ENCODE measurements at regions of chr14 and their contacts with region 1.

Region 1: DNA sequence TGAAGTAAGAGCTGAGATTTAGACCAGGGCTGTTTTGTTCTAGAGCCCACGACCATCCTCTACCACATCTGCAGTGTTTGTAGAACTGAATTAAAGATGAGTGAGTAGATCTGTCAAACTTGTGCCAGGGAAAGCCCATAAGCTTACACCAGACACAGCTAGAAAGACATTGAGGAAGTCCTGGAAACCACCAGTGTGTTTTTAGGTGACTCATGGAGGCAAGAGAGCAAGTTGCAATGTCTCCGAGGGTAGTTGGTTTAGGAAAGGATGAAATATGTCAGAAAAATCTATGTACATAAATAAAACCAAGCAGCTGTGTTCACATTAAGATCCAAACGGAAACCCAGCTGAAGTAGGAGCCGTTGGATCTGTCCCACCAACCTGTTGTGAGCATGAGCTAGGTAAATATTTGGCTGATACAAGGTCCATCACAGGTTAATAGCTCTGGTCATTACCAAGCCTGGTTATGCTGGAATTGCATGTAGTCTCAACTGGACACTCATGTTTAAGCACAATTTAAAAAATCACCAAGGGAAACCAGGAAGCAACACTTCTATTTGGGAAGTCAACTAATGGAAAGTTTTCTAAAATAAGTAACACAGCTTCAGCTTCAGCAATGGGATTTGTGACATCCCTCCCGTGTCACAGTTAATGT is 49.9 kb upstream of the PLEKHG3 start:
- DNase-seq: peak; percentile 91
- H3K4me3 ChIP-seq: no peak overlapping the region
- H3K27ac ChIP-seq: no peak overlapping the region
- H3K4me1 ChIP-seq: peaks cover 11% of the 10 kb centered on the region
- H3K27me3 ChIP-seq: no peaks in the 10 kb centered on the region
- CTCF ChIP-seq: no peak

Region 2: DNA sequence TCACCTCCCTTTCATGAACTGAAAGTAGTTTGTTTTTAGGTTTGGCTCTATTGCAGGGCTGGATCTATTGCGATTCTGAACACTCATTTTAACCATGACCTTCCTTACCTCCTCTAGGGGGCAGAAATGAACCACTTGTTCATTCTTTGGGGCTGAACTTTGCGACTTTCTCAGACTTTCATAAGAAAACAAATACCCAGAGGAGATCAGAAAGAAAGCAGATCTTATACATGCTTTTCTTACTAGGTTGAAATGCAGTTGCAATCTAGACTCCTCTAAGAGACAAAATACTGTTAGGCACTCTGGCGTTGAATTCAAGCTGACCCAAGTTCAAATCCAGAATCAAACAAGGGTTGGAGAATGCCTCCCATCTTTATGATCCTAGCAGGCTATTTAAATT is 17.2 kb after region 1 on chr14:
- CTCF ChIA-PET with region 1: no interaction called
- dilution Hi-C with region 1: no loop called
- in situ Hi-C with region 1: no loop called
- intact Hi-C with region 1: no loop called
- DNase-seq: peak; percentile 60
- H3K4me3 ChIP-seq: no peak overlapping the region
- H3K27ac ChIP-seq: no peak overlapping the region
- H3K4me1 ChIP-seq: peaks cover 27% of the 10 kb centered on the region
- H3K27me3 ChIP-seq: no peaks in the 10 kb centered on the region
- CTCF ChIP-seq: peak; percentile 72 to 82

Region 3: DNA sequence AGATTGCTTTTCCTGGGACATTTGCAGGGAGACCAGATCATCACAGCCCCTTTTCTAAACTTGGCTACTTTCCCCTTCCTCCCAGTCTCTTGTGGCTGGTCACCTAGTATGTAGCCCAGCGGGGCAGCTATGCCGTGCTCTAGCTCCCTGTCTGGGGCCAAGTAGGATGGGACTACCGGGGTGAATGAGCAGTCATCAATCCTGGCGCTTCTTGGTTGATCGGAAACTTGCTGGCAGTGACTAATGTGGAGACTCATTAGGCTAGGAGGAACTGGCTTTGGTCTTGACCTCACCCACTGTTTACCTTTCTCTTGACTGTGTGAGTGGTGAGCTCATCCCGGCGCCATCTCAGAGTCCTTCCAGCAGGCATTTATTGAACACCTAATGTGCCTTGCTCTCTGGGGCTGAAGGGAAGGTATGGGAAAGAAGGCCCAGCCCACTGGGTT is 65.8 kb after region 1 on chr14:
- CTCF ChIA-PET with region 1: no interaction called
- dilution Hi-C with region 1: loop called (anchors 10 kb)
- in situ Hi-C with region 1: no loop called
- intact Hi-C with region 1: no loop called
- DNase-seq: peak; percentile 98
- H3K4me3 ChIP-seq: no peak overlapping the region
- H3K27ac ChIP-seq: peak overlapping the region; percentile 89
- H3K4me1 ChIP-seq: peaks cover 98% of the 10 kb centered on the region
- H3K27me3 ChIP-seq: no peaks in the 10 kb centered on the region
- CTCF ChIP-seq: no peak

Region 4: GRCh38 chr14:64734990-64735389 is 80.6 kb after region 1 on chr14:
- CTCF ChIA-PET with region 1: no interaction called
- dilution Hi-C with region 1: loop called (anchors 5 kb)
- in situ Hi-C with region 1: no loop called
- intact Hi-C with region 1: no loop called
- DNase-seq: no peak
- H3K4me3 ChIP-seq: no peak overlapping the region
- H3K27ac ChIP-seq: no peak overlapping the region
- H3K4me1 ChIP-seq: peaks cover 6% of the 10 kb centered on the region
- H3K27me3 ChIP-seq: no peaks in the 10 kb centered on the region
- CTCF ChIP-seq: no peak

Region 5: DNA sequence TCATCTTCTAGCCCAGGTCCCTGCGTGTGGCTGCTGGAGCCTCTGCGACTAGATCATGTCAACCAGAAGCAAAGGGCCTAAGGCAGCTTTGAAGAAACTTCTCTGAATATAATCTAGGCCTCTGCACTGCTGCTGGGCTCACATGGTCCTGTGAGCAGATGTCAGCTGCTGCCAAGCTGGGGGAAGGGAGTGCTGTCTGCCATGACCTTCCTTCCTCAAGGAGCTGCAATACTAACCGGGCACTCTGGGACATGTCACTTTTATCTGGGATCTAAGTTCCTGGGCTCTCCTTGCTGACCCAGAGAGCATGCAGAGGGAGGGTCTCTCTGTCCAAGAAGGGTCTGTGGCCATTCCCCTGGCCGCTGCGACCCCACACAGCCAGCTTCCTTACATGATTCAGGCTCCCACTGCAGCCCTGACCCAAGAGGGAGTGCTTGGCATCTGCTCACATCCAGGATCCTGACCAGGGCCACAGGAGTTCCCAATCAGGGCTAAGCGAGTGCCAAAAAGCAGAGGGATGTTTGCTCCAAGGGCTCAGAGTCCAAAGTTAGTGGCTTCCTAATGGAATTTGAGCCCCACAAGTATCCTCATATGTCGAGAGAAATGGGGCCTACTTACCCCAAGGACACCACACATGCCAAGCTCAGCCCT is 123.9 kb after region 1 on chr14:
- CTCF ChIA-PET with region 1: no interaction called
- dilution Hi-C with region 1: no loop called
- in situ Hi-C with region 1: no loop called
- intact Hi-C with region 1: no loop called
- DNase-seq: no peak
- H3K4me3 ChIP-seq: no peak overlapping the region
- H3K27ac ChIP-seq: no peak overlapping the region
- H3K4me1 ChIP-seq: no peaks in the 10 kb centered on the region
- H3K27me3 ChIP-seq: no peaks in the 10 kb centered on the region
- CTCF ChIP-seq: no peak

Measured in mammary epithelial cell (primary cell).